SK-N-SH (cell line): ENCODE measurements at regions of chr20 and their contacts with region 1.

Region 1: DNA sequence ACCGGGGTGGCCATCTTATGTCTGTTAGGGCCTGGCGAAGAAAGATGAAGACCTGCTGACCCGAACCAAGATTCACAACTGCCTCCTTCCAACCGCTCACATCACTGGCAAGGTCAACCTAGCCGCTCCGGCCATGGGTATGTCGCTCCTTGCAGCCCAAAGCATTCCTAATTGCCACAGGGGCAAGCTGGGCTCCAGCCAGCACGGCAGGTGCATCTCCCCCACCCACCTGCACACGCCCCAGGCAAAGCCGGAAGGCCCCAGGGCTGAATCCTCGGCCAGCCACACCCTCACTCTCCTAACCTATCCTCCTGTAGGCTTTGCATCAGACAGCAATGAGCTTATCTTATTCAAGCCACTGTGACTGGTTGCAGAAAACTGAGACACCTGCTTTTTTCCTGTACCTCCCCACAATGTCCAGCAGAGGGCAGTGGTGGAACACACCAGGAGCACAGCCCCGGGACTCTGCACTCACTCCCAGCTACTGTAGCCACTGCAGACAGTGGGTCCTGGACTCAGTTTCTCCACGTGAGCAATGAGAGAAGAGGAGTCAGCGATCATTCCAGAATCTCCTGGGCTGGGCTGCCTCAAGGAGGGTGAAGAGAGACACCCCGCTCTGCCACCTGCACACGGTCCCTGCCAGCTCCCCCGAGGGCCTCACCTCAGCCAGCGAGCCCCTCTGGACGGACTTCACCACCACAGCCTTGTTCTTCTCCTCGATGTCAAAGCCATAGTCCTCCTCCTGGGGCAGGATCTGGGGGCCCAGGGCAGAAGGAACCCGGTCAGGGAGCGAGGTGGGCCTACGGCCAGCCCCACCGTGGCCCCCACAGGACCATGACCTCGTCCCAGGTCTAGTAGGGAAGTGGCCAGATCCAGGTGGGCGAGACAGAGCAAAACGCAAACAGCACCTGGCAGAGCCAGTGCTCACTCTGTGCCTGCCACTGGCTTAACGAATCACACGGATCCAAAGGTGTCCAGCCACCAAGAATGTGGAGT is 170.0 kb downstream of the PREX1 start:
- DNase-seq: peak; percentile 92
- H3K4me3 ChIP-seq: no peak overlapping the region; a peak in 1 of 4 replicates
- H3K27ac ChIP-seq: no peak overlapping the region
- H3K4me1 ChIP-seq: no peaks in the 10 kb centered on the region
- H3K27me3 ChIP-seq: no peaks in the 10 kb centered on the region
- CTCF ChIP-seq: peak; percentile 94
- EP300 ChIP-seq: no peak
- RAD21 ChIP-seq: peak; percentile 99

Region 2: DNA sequence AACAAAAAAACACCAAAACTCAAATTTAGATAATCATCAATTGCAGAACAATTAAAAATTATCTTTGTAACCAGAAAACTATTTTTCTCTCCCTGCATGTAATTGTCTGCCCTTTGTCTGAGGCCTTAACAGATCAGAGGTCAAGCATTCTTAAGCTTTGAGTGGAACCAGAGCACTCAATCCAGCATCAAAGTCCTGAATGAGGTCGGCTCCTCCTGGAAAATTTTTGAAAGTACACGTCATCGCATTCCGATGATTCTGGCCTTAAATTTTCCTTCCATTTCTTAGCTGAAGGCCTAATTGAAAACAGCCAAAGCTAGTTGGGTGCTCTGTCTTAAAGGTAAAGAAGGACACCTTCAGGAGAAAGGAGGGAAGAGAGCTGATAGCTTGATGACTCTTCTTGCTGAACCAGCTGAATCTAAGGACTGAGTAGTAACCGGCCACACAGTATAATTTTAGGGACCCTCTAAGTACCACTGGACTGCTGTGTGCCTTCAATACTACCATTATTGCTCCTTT is 362.3 kb before region 1 on chr20:
- CTCF ChIA-PET with region 1: no interaction called
- POLR2A ChIA-PET with region 1: no interaction called
- DNase-seq: no peak
- H3K4me3 ChIP-seq: no peak overlapping the region
- H3K27ac ChIP-seq: peak overlapping the region; percentile 84
- H3K4me1 ChIP-seq: peaks cover 29 to 42% of the 10 kb centered on the region in 2 experiments
- H3K27me3 ChIP-seq: no peaks in the 10 kb centered on the region
- CTCF ChIP-seq: peak; percentile 62
- EP300 ChIP-seq: peak; percentile 48 to 95; a peak in 3 of 4 replicates
- RAD21 ChIP-seq: peak; percentile 67

Region 3: DNA sequence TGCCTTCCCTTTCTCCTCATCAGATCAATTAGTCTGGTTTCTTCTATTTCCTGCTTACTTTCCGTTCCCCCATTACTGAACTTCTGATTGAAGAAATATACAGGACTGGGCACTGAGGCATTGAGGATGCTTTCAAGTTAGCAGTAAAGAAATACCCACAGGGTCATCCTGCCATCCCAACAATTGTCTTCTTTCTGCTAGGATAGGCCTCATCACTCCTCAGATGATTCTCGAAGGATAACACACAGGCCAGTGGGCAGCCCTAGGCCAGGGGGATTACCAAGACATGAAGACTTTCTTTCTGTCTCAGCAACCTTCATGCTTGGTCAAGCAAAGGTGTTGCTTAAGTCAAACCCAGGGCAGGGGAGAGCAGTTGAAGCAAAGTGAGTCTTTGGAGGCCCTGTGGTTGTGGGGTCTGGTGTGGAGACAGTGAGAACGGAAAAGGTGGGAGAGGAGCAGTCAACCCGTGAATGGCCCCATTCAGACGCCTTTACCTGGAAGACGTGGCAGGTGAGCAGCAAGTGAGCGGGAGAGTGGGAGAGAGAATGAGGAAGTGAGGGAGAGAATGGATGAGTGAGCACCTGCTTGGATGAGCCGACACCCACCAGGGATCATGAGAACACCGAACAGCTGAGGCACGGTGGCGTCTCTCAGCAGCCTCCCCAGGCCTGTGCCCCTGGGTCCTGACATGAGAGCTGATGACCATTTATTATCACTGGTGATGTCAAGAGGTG is 292.9 kb before region 1 on chr20:
- CTCF ChIA-PET with region 1: no interaction called
- POLR2A ChIA-PET with region 1: no interaction called
- DNase-seq: no peak
- H3K4me3 ChIP-seq: no peak overlapping the region
- H3K27ac ChIP-seq: no peak overlapping the region
- H3K4me1 ChIP-seq: peaks cover 0 to 22% of the 10 kb centered on the region in 2 experiments; a peak in 3 of 4 replicates
- H3K27me3 ChIP-seq: no peaks in the 10 kb centered on the region
- CTCF ChIP-seq: no peak
- EP300 ChIP-seq: no peak
- RAD21 ChIP-seq: no peak

Region 4: DNA sequence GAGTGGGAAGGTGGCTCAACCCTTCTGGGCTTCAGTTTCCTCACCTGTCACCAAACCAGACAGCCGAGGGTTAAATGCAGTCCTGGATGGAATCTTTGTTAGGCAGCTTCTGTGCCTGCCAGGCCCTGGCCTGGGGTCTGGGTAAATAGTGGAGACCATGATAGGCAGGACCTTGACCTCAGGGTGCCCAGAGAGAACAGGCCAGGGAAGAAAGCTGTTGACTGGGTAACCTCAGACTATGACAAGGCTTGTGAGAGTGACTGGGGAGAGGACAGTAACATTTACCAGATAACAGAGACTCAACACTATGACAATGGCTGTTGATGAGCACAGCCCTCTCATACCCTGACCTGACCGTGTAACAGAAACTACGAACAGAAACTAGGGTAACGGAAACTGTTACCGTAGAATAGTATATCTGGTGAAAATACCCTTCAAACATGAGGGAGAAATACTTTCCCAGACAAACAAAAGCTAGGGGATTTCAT is 48.2 kb before region 1 on chr20:
- CTCF ChIA-PET with region 1: no interaction called
- POLR2A ChIA-PET with region 1: no interaction called
- DNase-seq: no peak
- H3K4me3 ChIP-seq: no peak overlapping the region
- H3K27ac ChIP-seq: no peak overlapping the region
- H3K4me1 ChIP-seq: peaks cover 0 to 12% of the 10 kb centered on the region in 2 experiments; a peak in 1 of 4 replicates
- H3K27me3 ChIP-seq: no peaks in the 10 kb centered on the region
- CTCF ChIP-seq: no peak
- EP300 ChIP-seq: no peak
- RAD21 ChIP-seq: no peak

Region 5: GRCh38 chr20:48673556-48673955 is 15.8 kb after region 1 on chr20:
- CTCF ChIA-PET with region 1: interaction called, 29 read pairs
- POLR2A ChIA-PET with region 1: no interaction called
- DNase-seq: no peak
- H3K4me3 ChIP-seq: no peak overlapping the region
- H3K27ac ChIP-seq: no peak overlapping the region
- H3K4me1 ChIP-seq: peaks cover 0 to 11% of the 10 kb centered on the region in 2 experiments; a peak in 1 of 4 replicates
- H3K27me3 ChIP-seq: no peaks in the 10 kb centered on the region
- CTCF ChIP-seq: no peak
- EP300 ChIP-seq: no peak
- RAD21 ChIP-seq: no peak

Region 6: GRCh38 chr20:48706173-48707015 is 48.6 kb after region 1 on chr20:
- CTCF ChIA-PET with region 1: interaction called, 15 read pairs
- POLR2A ChIA-PET with region 1: no interaction called
- DNase-seq: no peak
- H3K4me3 ChIP-seq: no peak overlapping the region
- H3K27ac ChIP-seq: no peak overlapping the region
- H3K4me1 ChIP-seq: peaks cover 0 to 15% of the 10 kb centered on the region in 2 experiments; a peak in 1 of 4 replicates
- H3K27me3 ChIP-seq: no peaks in the 10 kb centered on the region
- CTCF ChIP-seq: no peak; the same call in 1 of the 2 replicates
- EP300 ChIP-seq: no peak
- RAD21 ChIP-seq: no peak

Region 7: DNA sequence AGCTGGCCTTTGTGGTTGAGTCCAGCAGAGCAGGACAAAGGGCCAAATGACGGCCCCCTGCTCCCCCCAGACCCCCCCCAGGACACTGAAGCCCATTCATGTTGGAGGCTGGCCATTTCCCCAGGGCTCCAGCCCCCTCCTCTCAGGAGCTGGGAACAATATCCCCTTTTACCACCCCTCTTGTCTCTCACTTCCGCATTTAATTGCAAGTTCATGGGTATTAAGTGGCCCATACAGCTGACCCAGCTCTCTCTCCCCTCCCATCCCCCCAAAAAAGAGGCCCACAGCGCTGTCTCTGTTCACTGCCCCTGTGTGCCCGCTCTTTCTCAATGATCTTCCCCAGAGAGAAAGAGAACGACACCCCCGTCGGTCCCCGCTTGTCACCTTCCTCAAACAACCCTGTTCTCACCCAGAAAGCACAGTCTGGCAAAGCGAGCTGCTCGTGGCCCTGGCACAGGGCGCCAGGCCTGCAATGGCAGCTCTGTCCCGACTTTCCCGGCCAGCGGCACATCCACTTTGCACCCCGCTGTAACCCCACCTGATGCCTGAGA is 139.6 kb after region 1 on chr20:
- CTCF ChIA-PET with region 1: interaction called, 23 read pairs
- POLR2A ChIA-PET with region 1: no interaction called
- DNase-seq: no peak
- H3K4me3 ChIP-seq: no peak overlapping the region
- H3K27ac ChIP-seq: no peak overlapping the region
- H3K4me1 ChIP-seq: peaks cover 0 to 7% of the 10 kb centered on the region in 2 experiments; a peak in 2 of 4 replicates
- H3K27me3 ChIP-seq: no peaks in the 10 kb centered on the region
- CTCF ChIP-seq: no peak
- EP300 ChIP-seq: no peak
- RAD21 ChIP-seq: no peak

Region 8: DNA sequence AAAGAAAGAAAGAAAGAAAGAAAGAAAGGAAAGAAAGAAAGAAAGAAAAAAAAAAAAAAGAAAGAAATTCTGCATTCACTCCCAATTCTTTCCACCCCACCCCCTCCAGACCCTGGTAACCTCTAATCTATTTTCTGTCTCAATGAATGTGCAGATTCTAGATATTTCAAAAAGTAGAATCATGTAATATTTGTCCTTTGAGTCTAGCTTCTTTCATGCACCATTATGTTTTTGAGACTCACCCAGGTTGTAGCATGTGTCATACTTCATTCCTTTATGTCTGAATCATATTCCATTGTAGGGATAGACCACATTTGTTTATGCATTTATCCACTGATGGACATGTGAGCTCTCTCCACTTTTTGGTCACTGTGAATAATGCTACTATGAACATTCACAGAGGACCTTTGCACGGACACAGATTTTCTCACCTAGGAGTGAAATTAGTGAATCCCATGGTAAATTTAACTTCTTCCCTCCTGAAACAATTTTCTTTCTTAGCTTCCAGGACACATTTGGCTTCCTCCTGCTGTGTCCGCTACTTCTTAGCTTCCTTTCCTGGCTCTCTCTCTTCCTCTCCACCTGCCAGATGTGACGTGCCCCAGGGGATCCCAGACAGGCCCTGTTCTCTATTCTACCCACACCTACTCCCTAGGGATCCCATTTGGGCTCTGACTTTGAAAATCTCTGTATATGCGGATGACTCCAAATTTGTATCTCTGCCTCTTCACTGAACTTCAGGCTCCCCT is 239.6 kb after region 1 on chr20:
- CTCF ChIA-PET with region 1: interaction called, 68 read pairs
- POLR2A ChIA-PET with region 1: interaction called, 3 read pairs
- DNase-seq: no peak
- H3K4me3 ChIP-seq: no peak overlapping the region
- H3K27ac ChIP-seq: no peak overlapping the region
- H3K4me1 ChIP-seq: peaks cover 0 to 12% of the 10 kb centered on the region in 2 experiments; a peak in 1 of 4 replicates
- H3K27me3 ChIP-seq: no peaks in the 10 kb centered on the region
- CTCF ChIP-seq: no peak
- EP300 ChIP-seq: no peak
- RAD21 ChIP-seq: no peak

Region 9: DNA sequence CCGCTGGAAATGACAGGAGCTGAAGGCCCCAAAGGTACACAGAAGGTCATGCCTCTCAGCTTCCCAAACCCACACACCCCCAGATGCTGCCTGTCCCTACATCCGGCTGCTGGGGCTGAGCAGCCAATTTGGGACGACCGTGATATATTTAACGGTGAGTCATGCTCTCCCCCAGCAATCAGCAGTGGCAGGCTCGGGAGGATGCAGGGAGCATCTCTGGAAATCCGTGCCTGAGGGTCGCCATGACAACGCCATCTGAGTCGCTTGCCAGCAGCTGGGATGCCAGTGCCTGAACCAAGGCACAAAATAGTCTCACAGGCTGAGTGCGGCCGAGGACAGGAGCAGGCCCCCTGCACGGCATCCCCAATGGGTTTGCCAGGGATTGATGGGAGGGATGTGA is 766.8 kb after region 1 on chr20:
- CTCF ChIA-PET with region 1: no interaction called
- POLR2A ChIA-PET with region 1: no interaction called
- DNase-seq: peak; percentile 79
- H3K4me3 ChIP-seq: no peak overlapping the region
- H3K27ac ChIP-seq: peak overlapping the region in 1 of 2 experiments; percentile 78; a peak in 2 of 4 replicates
- H3K4me1 ChIP-seq: peaks cover 0 to 23% of the 10 kb centered on the region in 2 experiments; a peak in 2 of 4 replicates
- H3K27me3 ChIP-seq: no peaks in the 10 kb centered on the region
- CTCF ChIP-seq: no peak
- EP300 ChIP-seq: no peak
- RAD21 ChIP-seq: peak; percentile 22; the same call in 1 of the 2 replicates